SK-N-SH (cell line): ENCODE measurements at regions of chr6 and their contacts with region 1.

Region 1: GRCh38 chr6:40587240-40588069 is at the start of gene LRFN2:
- DNase-seq: peak; percentile 92
- H3K4me3 ChIP-seq: peak within 1 kb of the TSS; percentile 48 to 61
- H3K27ac ChIP-seq: peak within 1 kb of the TSS in 1 of 2 experiments; percentile 82; a peak in 2 of 4 replicates
- H3K4me1 ChIP-seq: peaks cover 0 to 38% of the 10 kb centered on the region in 2 experiments; a peak in 1 of 4 replicates
- H3K27me3 ChIP-seq: peaks cover 20% of the 10 kb centered on the region; the same call in 1 of the 2 replicates
- CTCF ChIP-seq: peak; percentile 58
- EP300 ChIP-seq: no peak
- RAD21 ChIP-seq: peak; percentile 62
- polyA plus RNA-seq, gene LRFN2: 0.02 and 0.13 TPM in 2 replicates

Region 2: DNA sequence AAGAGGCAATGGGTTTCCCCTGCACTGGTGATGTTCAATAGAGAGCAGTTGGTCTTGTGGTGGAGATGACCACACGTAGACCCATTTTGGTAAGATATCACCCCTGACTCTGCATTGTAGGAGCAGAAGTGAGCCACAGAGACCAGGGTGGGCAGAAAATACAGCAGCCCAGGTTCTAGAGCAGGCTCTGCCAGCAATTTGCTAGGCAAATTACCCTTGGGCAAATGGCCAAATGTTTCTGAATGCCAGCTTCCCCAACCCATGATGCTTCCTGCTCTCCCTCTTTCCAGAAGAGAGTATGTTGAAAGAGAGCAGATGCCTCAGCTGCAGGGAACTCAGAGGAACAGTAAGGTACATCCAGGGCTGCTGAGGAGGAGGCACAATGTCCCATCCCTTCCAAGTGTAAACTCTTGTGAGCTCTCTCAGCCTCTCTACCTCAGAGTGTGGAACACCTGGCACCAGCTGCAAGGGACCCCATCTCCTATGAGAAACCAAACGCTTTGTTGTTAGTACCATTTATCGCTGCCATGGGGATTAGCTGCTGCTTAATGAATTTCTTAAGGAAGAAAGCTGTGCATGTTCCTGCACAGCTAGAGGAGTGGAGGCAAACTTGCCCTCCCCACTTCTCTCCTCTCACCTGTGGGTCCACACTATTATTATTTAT is 335.7 kb before region 1 on chr6:
- CTCF ChIA-PET with region 1: no interaction called
- POLR2A ChIA-PET with region 1: no interaction called
- DNase-seq: no peak
- H3K4me3 ChIP-seq: no peak overlapping the region
- H3K27ac ChIP-seq: no peak overlapping the region
- H3K4me1 ChIP-seq: peaks cover 0 to 5% of the 10 kb centered on the region in 2 experiments; a peak in 1 of 4 replicates
- H3K27me3 ChIP-seq: no peaks in the 10 kb centered on the region
- CTCF ChIP-seq: no peak
- EP300 ChIP-seq: no peak
- RAD21 ChIP-seq: no peak

Region 3: GRCh38 chr6:40308533-40309306 is 278.7 kb before region 1 on chr6:
- CTCF ChIA-PET with region 1: interaction called, 18 read pairs
- POLR2A ChIA-PET with region 1: no interaction called
- DNase-seq: peak; percentile 82
- H3K4me3 ChIP-seq: no peak overlapping the region
- H3K27ac ChIP-seq: no peak overlapping the region
- H3K4me1 ChIP-seq: peaks cover 0 to 4% of the 10 kb centered on the region in 2 experiments; a peak in 1 of 4 replicates
- H3K27me3 ChIP-seq: no peaks in the 10 kb centered on the region
- CTCF ChIP-seq: peak; percentile 65
- EP300 ChIP-seq: no peak
- RAD21 ChIP-seq: peak; percentile 77

Region 4: GRCh38 chr6:40425192-40425919 is 162.1 kb before region 1 on chr6:
- CTCF ChIA-PET with region 1: interaction called, 22 read pairs
- POLR2A ChIA-PET with region 1: interaction called, 3 read pairs
- DNase-seq: peak; percentile 80
- H3K4me3 ChIP-seq: no peak overlapping the region
- H3K27ac ChIP-seq: peak overlapping the region in 1 of 2 experiments; percentile 99; a peak in 2 of 4 replicates
- H3K4me1 ChIP-seq: peaks cover 0 to 60% of the 10 kb centered on the region in 2 experiments; a peak in 2 of 4 replicates
- H3K27me3 ChIP-seq: no peaks in the 10 kb centered on the region
- CTCF ChIP-seq: no peak
- EP300 ChIP-seq: peak in 1 of 2 experiments; percentile 93; a peak in 2 of 4 replicates
- RAD21 ChIP-seq: peak; percentile 34

Region 5: GRCh38 chr6:40512340-40512739 is 75.1 kb before region 1 on chr6:
- CTCF ChIA-PET with region 1: interaction called, 10 read pairs
- POLR2A ChIA-PET with region 1: interaction called, 3 read pairs
- DNase-seq: peak; percentile 65
- H3K4me3 ChIP-seq: no peak overlapping the region
- H3K27ac ChIP-seq: peak overlapping the region in 1 of 2 experiments; percentile 80; a peak in 2 of 4 replicates
- H3K4me1 ChIP-seq: peaks cover 0 to 64% of the 10 kb centered on the region in 2 experiments; a peak in 2 of 4 replicates
- H3K27me3 ChIP-seq: no peaks in the 10 kb centered on the region
- CTCF ChIP-seq: no peak
- EP300 ChIP-seq: peak in 1 of 2 experiments; percentile 83; a peak in 1 of 4 replicates
- RAD21 ChIP-seq: peak; percentile 11; the same call in 1 of the 2 replicates

Region 6: GRCh38 chr6:40599555-40599954 is 12.1 kb after region 1 on chr6:
- CTCF ChIA-PET with region 1: interaction called, 17 read pairs
- POLR2A ChIA-PET with region 1: no interaction called
- DNase-seq: no peak
- H3K4me3 ChIP-seq: no peak overlapping the region
- H3K27ac ChIP-seq: no peak overlapping the region
- H3K4me1 ChIP-seq: no peaks in the 10 kb centered on the region
- H3K27me3 ChIP-seq: no peaks in the 10 kb centered on the region
- CTCF ChIP-seq: no peak
- EP300 ChIP-seq: no peak
- RAD21 ChIP-seq: no peak

Region 7: DNA sequence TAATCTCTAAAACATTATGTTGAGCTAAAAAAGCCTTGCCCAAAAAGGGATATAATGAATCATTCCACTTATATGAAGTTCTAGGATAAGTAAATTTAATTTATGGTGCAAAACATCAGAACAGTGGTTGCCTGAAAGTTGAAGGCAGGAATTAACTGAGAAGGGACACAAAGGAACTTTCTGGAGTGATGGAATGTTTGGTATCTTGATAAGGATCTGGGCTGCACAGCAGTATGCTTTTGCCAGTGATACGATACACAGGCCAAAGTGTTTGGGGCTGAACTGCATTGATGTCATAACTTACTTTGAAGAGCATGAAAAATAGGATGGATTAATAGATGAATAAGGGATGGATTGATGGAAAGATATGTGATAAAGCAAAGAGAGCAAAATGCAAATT is 145.8 kb after region 1 on chr6:
- CTCF ChIA-PET with region 1: interaction called, 11 read pairs
- POLR2A ChIA-PET with region 1: no interaction called
- DNase-seq: no peak
- H3K4me3 ChIP-seq: no peak overlapping the region
- H3K27ac ChIP-seq: peak overlapping the region in 1 of 2 experiments; percentile 20; a peak in 2 of 4 replicates
- H3K4me1 ChIP-seq: peaks cover 0 to 16% of the 10 kb centered on the region in 2 experiments; a peak in 2 of 4 replicates
- H3K27me3 ChIP-seq: no peaks in the 10 kb centered on the region
- CTCF ChIP-seq: no peak
- EP300 ChIP-seq: no peak
- RAD21 ChIP-seq: no peak